Activated CD4-positive, alpha-beta T cell treated with anti-CD3 and anti-CD28 coated beads for 36 hours (primary cell): ENCODE measurements at regions of chr14 and their contacts with region 1.

Region 1: DNA sequence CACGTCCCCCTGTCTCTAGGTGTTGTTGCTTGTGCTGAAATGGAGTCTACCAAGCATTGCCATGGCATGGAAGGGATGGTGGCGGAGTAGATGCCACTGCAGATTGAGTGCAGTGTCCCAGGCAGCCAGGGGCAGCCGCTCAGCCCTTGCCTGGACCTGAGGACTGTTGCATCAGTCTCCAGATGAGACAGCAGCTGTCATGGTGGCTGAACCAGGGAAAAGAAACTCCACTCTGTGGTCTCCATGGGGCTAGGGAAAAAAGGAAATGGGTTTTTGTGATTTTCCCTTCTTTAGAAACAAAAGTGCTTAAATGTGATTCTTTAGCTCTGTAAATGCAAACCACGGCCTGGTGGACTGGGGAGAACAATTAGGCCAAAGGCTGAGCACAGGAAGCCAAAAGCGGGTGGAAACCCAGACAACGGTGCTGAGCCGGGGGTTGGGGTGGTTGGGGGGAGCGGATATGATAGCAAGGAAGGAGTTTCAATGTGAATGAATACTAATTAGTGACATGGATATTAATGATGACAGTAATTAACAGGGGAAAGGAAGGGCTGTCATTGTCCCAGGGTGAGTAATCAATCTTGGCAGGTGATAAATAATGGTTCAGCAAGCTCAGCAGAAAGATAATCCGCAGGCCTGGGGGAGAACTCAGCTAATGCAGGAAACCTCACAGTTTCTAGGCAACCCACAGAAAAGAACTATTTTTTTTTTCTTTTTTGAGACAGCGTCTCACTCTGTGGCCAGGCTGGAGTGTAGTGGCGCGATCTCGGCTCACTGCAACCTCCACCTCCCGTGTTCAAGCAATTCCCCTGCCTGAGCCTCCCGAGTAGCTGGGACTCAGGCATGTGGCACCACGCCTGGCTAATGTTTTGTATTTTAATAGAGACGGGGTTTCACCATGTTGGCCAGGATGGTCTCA is 442.6 kb downstream of the DPF3 start:
- DNase-seq: peak; percentile 61
- ATAC-seq: peak; percentile 82
- H3K4me3 Mint-ChIP-seq: peak overlapping the region; percentile 22
- H3K27ac Mint-ChIP-seq: peak overlapping the region; percentile 71
- H3K4me1 Mint-ChIP-seq: peaks cover 25% of the 10 kb centered on the region
- H3K27me3 Mint-ChIP-seq: no peaks in the 10 kb centered on the region

Region 2: DNA sequence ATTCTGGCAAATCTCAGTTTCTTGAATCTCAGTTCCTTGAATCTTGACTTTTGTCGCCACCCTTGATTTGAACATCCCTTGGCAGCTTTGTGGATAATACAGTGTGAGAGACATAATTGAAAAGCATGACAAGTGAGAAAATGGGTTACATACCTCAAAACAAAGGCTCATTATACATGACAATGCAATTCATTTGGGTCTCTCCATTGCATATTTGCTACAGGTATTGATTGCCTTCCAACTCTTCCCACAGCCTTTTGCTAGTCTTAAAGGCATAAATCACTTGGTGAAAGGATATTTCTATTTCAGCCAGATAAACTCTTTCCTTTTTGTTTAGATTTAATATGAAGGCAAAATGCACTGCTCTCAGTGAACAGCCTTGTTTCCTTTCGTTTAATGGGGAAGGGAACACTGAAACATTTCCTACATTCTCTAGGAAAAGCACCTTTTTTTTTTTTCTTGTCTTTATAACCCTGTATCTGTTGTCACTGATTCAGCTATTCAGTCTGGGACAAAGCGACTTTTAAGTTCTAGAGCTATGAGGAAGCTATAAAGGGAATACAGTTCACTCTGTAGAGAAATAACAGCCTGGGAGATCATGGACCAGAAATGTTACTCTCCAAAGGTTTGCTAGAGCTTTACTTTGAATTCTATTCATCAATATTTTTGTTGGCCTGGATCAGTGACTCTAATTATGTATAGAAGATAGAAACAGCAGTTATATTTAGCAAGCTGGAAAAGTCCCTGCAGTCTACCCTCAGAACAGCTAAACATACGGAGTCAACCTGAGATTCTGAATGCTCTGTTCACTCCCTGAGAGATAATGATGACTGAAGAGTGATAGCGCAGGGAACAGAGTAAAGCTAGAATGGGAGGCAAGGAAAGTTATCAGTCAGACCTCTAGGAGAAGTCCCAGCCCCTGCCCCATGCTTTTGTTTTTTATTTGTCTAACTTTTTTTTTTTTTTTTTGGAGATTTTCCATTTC is 207.7 kb before region 1 on chr14:
- CTCF ChIA-PET with region 1: no interaction called
- POLR2A ChIA-PET with region 1: no interaction called
- intact Hi-C with region 1: no loop called
- DNase-seq: no peak
- ATAC-seq: no peak
- H3K4me3 Mint-ChIP-seq: no peak overlapping the region
- H3K27ac Mint-ChIP-seq: no peak overlapping the region
- H3K4me1 Mint-ChIP-seq: no peaks in the 10 kb centered on the region
- H3K27me3 Mint-ChIP-seq: peaks cover 19% of the 10 kb centered on the region

Region 3: DNA sequence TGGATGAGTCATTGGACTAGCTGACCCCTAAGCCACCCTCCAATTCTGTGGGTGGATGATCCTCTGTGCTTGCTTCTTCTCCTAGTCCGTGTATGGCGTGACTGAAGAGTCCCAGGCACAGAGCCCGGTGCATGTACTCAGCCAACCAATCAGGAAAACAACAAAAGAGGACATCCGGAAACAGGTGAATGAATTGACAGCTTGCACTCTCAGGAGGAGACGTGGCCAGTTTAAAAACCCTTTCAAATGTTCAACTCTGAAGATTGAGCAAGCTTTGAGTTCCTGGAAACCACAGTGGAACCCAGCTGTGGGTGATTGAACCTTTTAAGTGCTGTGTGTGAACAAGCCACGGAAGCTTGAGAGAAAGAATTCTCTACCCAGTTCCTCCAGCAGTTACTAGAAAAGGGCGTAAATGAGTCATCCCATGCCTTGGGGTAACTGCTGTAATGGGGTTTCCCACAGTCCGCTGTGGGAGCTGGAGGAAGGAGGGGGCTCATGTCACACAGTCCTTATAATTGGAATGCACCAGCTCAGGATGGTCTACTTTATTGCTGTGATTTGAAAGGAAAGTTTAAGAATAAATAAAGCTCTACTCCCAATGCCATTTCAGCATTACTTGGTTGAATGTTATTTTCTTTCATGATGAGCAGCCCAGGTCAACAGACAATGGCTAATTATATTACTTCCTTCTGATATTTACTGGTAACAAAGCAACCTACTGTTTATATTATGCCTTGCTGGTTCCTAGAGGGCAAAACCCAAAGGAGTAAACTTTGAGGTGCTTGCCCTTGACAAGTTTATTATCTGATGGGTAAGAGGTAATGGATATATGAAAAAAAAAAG is 25.6 kb after region 1 on chr14:
- CTCF ChIA-PET with region 1: interaction called, 3 read pairs
- POLR2A ChIA-PET with region 1: interaction called, 7 read pairs
- intact Hi-C with region 1: loop called (anchors 1 to 2 kb)
- DNase-seq: peak; percentile 86
- ATAC-seq: peak; percentile 93
- H3K4me3 Mint-ChIP-seq: peak overlapping the region; percentile 35
- H3K27ac Mint-ChIP-seq: peak overlapping the region; percentile 73
- H3K4me1 Mint-ChIP-seq: peaks cover 41% of the 10 kb centered on the region
- H3K27me3 Mint-ChIP-seq: peaks cover 14% of the 10 kb centered on the region

Region 4: DNA sequence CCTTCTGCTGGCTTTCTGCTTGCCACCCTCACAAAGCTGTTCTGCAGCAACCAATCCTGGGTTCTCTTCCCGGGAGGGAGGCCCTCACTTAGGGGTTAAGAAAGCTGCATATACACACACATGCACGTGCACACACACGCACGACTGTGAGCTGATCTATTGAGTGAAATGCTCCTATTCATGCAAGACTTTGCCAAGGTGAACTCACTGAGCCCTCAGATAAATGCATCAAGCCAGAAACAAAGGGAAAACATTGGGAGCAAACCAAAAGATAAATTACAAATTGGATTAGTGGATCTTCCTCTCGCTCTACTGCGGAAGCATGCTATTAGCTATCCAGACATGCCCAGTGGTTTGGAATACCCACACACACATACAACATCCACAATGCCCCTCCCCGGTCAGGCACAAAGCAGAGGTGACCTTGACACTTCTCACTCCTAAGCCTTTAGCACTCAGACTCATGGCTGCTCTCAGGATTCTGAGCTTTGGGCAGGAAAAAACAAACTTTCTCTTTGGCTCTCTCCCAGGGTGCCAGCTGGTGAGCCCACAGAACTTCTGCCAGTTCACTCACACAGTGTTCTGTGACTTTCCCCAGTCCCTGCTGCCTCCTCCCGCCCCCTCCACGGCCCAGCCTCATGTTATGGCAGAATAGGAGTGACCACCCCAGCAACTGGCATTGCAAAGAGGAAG is 122.6 kb after region 1 on chr14:
- CTCF ChIA-PET with region 1: no interaction called
- POLR2A ChIA-PET with region 1: no interaction called
- intact Hi-C with region 1: no loop called
- DNase-seq: no peak
- ATAC-seq: no peak
- H3K4me3 Mint-ChIP-seq: no peak overlapping the region
- H3K27ac Mint-ChIP-seq: no peak overlapping the region
- H3K4me1 Mint-ChIP-seq: peaks cover 3% of the 10 kb centered on the region
- H3K27me3 Mint-ChIP-seq: peaks cover 2% of the 10 kb centered on the region